Activated B cell treated with CpG ODN at 0.5 μM for 24 hours (primary cell): ENCODE measurements at regions of chr11 and their contacts with region 1.

Region 1: GRCh38 chr11:112280268-112281126 is 19.8 kb upstream of the PLET1 start:
- DNase-seq: peak; percentile 47
- ATAC-seq: peak; percentile 91
- H3K4me3 Mint-ChIP-seq: peak overlapping the region; percentile 91
- H3K27ac Mint-ChIP-seq: peak overlapping the region; percentile 80
- H3K4me1 Mint-ChIP-seq: peaks cover 19% of the 10 kb centered on the region
- H3K27me3 Mint-ChIP-seq: no peaks in the 10 kb centered on the region
- CTCF ChIP-seq: no peak

Region 2: DNA sequence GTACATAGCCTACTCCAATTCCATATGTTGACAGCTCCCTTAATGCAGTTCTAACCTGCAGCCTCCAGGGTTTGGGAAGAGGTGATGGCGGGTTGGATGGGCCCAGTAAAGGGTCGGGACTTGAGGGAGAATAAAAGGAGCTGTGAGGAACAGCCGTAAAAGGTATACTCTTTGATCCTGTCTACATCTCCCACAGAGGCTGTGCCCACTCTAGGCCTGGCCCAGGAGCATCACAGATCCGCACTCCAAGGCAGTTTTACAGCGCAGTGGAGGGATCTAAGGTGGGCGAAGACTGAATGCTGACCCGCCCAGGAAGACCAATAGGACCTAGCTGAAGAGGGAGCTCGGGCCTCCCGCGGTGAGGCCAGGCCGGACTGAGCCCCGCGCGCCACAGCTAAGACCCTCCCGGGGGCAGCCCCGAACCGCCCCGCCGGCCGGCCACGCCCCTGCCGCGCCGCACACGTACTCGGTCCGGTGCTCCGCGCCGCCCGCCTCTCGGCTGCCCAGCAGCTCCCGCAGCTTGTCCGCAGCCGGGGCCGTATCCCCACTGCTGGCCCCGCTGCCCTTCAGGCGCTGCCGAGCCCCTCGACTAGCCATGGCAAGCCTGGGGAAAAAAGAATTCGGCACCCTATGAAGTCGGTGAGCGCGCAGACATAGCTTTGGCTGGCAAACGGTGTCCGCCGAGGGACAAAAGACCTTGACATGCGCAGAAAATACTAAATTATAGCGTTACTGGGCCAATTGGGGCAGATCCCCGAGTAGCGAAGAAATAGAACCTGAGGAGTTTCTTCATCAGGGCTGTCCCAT is 409.4 kb before region 1 on chr11 and contains the start of gene ALG9:
- CTCF ChIA-PET with region 1: no interaction called
- POLR2A ChIA-PET with region 1: no interaction called
- intact Hi-C with region 1: loop called (anchors 2 kb)
- DNase-seq: peak; percentile 90
- ATAC-seq: peak; percentile 89
- H3K4me3 Mint-ChIP-seq: peak within 1 kb of the TSS; percentile 93
- H3K27ac Mint-ChIP-seq: peak within 1 kb of the TSS; percentile 92
- H3K4me1 Mint-ChIP-seq: peaks cover 13% of the 10 kb centered on the region
- H3K27me3 Mint-ChIP-seq: no peaks in the 10 kb centered on the region
- CTCF ChIP-seq: no peak
- total RNA-seq, gene ALG9: 17.0 and 20.1 TPM in 2 replicates

Region 3: GRCh38 chr11:112113539-112114457 is 166.7 kb before region 1 on chr11:
- CTCF ChIA-PET with region 1: interaction called, 26 read pairs
- POLR2A ChIA-PET with region 1: interaction called, 4 read pairs
- intact Hi-C with region 1: loop called (anchors 1 kb)
- DNase-seq: no peak
- ATAC-seq: peak; percentile 56
- H3K4me3 Mint-ChIP-seq: no peak overlapping the region
- H3K27ac Mint-ChIP-seq: no peak overlapping the region
- H3K4me1 Mint-ChIP-seq: peaks cover 2% of the 10 kb centered on the region
- H3K27me3 Mint-ChIP-seq: no peaks in the 10 kb centered on the region
- CTCF ChIP-seq: peak; percentile 70

Region 4: DNA sequence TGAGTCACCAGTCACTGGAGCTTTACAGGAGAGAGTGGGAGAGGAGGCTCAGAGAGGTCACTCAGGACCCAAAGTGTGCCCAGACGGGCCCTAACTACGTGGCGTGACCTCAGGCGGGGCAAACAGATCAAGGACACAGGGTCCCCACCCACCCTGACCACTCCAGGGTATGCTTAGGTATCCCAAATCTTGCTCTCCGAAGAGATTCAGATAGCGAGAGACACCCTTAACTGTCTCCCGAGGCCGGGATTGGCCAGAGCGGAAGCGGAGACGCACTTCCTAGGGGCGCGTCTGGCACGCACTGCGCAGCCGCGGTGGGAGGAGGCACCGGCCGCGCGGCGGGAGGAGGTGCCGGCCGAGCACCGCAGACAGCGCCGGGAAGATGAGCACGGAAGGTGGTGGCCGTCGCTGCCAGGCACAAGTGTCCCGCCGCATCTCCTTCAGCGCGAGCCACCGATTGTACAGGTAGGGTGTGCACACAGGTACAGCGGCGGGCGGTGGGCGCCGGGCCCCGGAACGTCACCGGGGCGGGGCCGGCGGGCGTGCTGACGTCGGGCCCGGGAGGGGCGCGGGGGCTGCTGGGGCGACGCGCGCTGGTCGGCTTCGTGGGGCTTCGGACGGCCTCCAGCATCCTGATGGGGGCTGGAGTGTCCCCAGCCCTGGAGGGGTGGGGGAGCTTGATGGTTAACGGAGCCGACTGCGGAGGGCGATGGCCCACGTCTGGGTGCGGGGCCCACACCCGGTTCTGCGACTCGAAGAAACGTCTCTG is 54.3 kb before region 1 on chr11 and contains the start of gene PTS:
- CTCF ChIA-PET with region 1: interaction called, 166 read pairs
- POLR2A ChIA-PET with region 1: interaction called, 26 read pairs
- intact Hi-C with region 1: loop called (anchors 2 kb)
- DNase-seq: peak; percentile 87
- ATAC-seq: peak; percentile 93
- H3K4me3 Mint-ChIP-seq: peak within 1 kb of the TSS; percentile 92
- H3K27ac Mint-ChIP-seq: peak within 1 kb of the TSS; percentile 96
- H3K4me1 Mint-ChIP-seq: peaks cover 13% of the 10 kb centered on the region
- H3K27me3 Mint-ChIP-seq: no peaks in the 10 kb centered on the region
- CTCF ChIP-seq: no peak
- total RNA-seq, gene PTS: 22.7 and 30.4 TPM in 2 replicates

Region 5: DNA sequence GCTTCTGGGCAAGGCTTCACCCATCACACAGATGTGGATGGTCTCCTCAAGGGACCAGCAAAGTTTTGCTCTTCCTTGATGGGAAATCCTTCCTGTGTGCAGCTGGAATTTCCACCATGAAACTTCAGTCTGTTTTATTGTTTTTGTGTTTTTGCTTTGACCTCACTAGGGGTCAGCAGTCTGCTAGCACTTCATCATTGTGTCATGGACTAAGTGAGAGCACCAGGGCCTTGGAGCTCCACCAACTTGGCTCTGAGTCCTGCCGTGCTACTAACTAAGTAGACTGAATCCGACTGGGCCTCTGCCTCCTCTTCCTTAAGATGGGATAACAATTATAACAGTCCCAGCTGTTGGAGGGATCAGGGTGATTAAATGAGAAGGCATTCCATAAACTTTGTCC is 374.9 kb after region 1 on chr11:
- CTCF ChIA-PET with region 1: no interaction called
- POLR2A ChIA-PET with region 1: no interaction called
- intact Hi-C with region 1: no loop called
- DNase-seq: no peak
- ATAC-seq: no peak
- H3K4me3 Mint-ChIP-seq: no peak overlapping the region
- H3K27ac Mint-ChIP-seq: no peak overlapping the region
- H3K4me1 Mint-ChIP-seq: no peaks in the 10 kb centered on the region
- H3K27me3 Mint-ChIP-seq: no peaks in the 10 kb centered on the region
- CTCF ChIP-seq: no peak

Region 6: DNA sequence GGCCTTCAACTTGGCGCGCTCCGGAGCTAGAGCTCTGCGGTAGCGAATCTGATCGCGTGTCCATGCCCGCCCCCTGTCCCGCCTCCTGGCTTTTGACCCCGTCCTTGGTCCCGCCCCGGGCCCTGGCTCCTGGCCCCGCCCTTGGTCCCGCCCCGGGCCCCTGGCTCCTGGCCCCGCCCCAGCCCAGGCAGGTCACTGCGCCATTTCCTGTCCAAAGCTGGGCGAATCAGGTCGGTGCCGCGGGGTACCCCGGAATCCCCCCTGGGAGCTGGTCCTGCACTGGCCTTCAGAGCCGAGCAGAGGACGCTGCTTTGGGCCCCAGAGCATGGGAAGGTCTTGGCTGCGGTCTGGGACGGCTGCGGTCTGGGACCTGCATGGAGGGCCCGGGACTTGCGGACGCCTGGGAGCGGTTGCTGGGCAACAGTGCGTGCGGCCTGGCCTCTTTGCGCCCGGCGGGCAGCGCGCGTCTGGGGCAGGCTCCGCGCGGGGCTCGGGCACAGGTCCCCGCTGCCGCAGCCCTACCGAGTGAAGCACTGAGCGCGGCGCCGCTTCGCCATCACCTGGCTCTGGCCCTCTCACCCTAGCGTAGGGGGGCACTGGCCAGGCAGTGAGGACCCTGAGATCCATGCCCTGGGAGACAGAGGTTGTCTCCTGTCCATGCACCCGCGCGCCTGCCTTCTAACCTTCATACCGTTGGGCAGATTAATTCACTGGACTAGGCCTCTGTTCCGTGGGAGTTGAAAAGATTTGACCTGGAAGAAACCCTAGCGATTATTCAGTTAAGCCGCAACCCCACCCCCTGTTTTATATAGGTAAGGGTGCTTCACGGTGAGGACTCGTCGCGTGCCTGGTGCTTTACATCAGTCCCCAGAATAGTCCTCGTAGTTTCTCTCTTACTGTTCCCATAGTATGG is 1034.1 kb after region 1 on chr11 and contains the start of gene TTC12:
- CTCF ChIA-PET with region 1: no interaction called
- POLR2A ChIA-PET with region 1: no interaction called
- intact Hi-C with region 1: loop called (anchors 10 kb)
- DNase-seq: peak; percentile 98
- ATAC-seq: peak; percentile 99
- H3K4me3 Mint-ChIP-seq: peak within 1 kb of the TSS; percentile 85
- H3K27ac Mint-ChIP-seq: peak within 1 kb of the TSS; percentile 83
- H3K4me1 Mint-ChIP-seq: peaks cover 19% of the 10 kb centered on the region
- H3K27me3 Mint-ChIP-seq: no peaks in the 10 kb centered on the region
- CTCF ChIP-seq: no peak
- total RNA-seq, gene TTC12: 21.3 and 25.2 TPM in 2 replicates